GM12878 (cell line): ENCODE measurements at regions of chr20 and their contacts with region 1.

Region 1: DNA sequence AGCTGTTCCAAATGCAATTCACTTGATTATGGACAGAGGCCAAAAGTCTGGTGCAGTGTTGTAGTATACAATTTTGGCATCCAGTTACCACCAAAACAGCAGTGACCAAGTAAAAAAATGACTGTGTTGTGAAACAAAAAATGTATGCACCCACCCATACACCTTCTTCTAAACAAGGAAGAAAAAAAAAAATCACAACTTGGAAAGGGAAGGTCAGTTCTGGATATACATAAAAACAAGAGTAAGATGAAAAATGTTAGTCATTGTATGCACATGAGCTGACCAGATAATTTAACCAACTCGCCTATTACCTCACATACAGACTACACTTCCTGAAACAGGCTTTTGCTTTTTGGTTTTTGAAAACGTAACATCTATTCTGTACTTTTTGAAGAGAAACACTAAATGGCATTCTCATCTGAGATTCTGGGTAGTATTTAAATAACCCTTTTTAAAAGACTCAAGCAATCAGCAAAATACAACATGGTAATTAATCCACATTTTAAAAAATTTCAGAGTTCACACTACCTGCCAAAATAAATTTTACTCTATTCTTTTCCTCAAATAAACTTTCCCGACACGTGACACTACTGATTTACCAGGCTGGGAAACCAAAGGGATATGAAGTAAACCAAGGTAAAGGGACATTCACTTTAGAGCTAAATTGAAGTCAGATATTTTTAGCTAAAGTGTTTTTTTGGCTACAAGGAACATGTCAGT is 141.6 kb upstream of the SHLD1 start:
- DNase-seq: no peak
- ATAC-seq: peak; percentile 15
- H3K4me3 ChIP-seq: peak overlapping the region; percentile 87
- H3K27ac ChIP-seq: peak overlapping the region; percentile 98
- H3K4me1 ChIP-seq: peaks cover 5% of the 10 kb centered on the region; the same call in 1 of the 2 replicates
- H3K27me3 ChIP-seq: no peaks in the 10 kb centered on the region
- CTCF ChIP-seq: no peak
- EP300 ChIP-seq: no peak
- POLR2A ChIP-seq: no peak
- RAD21 ChIP-seq: no peak

Region 2: GRCh38 chr20:5078399-5078958 is 530.1 kb before region 1 on chr20:
- CTCF ChIA-PET with region 1: no interaction called
- POLR2A ChIA-PET with region 1: no interaction called
- RAD21 ChIA-PET with region 1: no interaction called
- SMC1A ChIA-PET with region 1: no interaction called
- in situ Hi-C with region 1: no loop called
- intact Hi-C with region 1: no loop called
- DNase-seq: peak; percentile 98
- ATAC-seq: peak; percentile 81
- H3K4me3 ChIP-seq: no peak overlapping the region; the same call in 1 of the 2 replicates
- H3K27ac ChIP-seq: peak overlapping the region; percentile 68
- H3K4me1 ChIP-seq: peaks cover 47% of the 10 kb centered on the region
- H3K27me3 ChIP-seq: no peaks in the 10 kb centered on the region; a peak in 1 of 4 replicates
- CTCF ChIP-seq: no peak
- EP300 ChIP-seq: peak; percentile 93 to 98
- POLR2A ChIP-seq: peak; percentile 51
- RAD21 ChIP-seq: no peak

Region 3: GRCh38 chr20:5364136-5364821 is 244.3 kb before region 1 on chr20:
- CTCF ChIA-PET with region 1: no interaction called
- POLR2A ChIA-PET with region 1: no interaction called
- RAD21 ChIA-PET with region 1: no interaction called
- SMC1A ChIA-PET with region 1: no interaction called
- in situ Hi-C with region 1: no loop called
- intact Hi-C with region 1: no loop called
- DNase-seq: no peak
- ATAC-seq: no peak
- H3K4me3 ChIP-seq: no peak overlapping the region
- H3K27ac ChIP-seq: no peak overlapping the region
- H3K4me1 ChIP-seq: no peaks in the 10 kb centered on the region
- H3K27me3 ChIP-seq: no peaks in the 10 kb centered on the region; a peak in 1 of 4 replicates
- CTCF ChIP-seq: no peak
- EP300 ChIP-seq: no peak
- POLR2A ChIP-seq: no peak
- RAD21 ChIP-seq: no peak

Region 4: DNA sequence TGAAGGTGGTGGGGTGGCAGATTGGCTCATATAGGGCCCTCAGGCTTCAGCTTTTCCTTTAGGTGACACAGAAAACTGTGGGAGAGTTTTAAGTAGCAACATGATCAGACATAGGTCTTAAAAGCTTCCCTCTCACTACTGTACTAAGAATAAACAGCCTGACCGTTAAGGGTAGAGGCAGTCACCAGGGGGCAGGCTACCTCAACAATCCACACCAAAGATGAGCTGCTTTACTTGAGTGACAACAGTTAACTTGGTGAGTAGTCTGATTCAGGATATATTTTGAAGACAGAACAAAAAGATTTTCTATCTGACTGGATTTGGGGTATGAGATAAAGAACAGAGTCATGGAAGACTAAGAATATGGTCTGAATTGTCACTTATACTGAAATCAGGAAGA is 51.5 kb before region 1 on chr20:
- CTCF ChIA-PET with region 1: interaction called, 15 read pairs
- POLR2A ChIA-PET with region 1: interaction called, 4 read pairs
- RAD21 ChIA-PET with region 1: interaction called, 12 read pairs
- SMC1A ChIA-PET with region 1: interaction called, 4 read pairs
- in situ Hi-C with region 1: no loop called
- intact Hi-C with region 1: no loop called
- DNase-seq: peak; percentile 15
- ATAC-seq: peak; percentile 85
- H3K4me3 ChIP-seq: no peak overlapping the region
- H3K27ac ChIP-seq: no peak overlapping the region; the same call in 1 of the 2 replicates
- H3K4me1 ChIP-seq: no peaks in the 10 kb centered on the region
- H3K27me3 ChIP-seq: no peaks in the 10 kb centered on the region
- CTCF ChIP-seq: peak; percentile 52 to 71 (median 65); a peak in 5 of 6 replicates
- EP300 ChIP-seq: no peak
- POLR2A ChIP-seq: no peak
- RAD21 ChIP-seq: peak; percentile 75

Region 5: GRCh38 chr20:5586720-5587119 is 21.9 kb before region 1 on chr20:
- CTCF ChIA-PET with region 1: interaction called, 10 read pairs
- POLR2A ChIA-PET with region 1: interaction called, 12 read pairs
- RAD21 ChIA-PET with region 1: no interaction called
- SMC1A ChIA-PET with region 1: interaction called, 7 read pairs
- in situ Hi-C with region 1: no loop called
- intact Hi-C with region 1: no loop called
- DNase-seq: no peak
- ATAC-seq: peak; percentile 56
- H3K4me3 ChIP-seq: no peak overlapping the region
- H3K27ac ChIP-seq: peak overlapping the region; percentile 44
- H3K4me1 ChIP-seq: peaks cover 44% of the 10 kb centered on the region
- H3K27me3 ChIP-seq: no peaks in the 10 kb centered on the region
- CTCF ChIP-seq: no peak
- EP300 ChIP-seq: no peak
- POLR2A ChIP-seq: no peak
- RAD21 ChIP-seq: no peak

Region 6: GRCh38 chr20:5596401-5597193 is 12.0 kb before region 1 on chr20:
- CTCF ChIA-PET with region 1: interaction called, 10 read pairs
- POLR2A ChIA-PET with region 1: interaction called, 38 read pairs
- RAD21 ChIA-PET with region 1: no interaction called
- SMC1A ChIA-PET with region 1: no interaction called
- in situ Hi-C with region 1: no loop called
- intact Hi-C with region 1: loop called (anchors 2 kb)
- DNase-seq: no peak
- ATAC-seq: peak; percentile 45
- H3K4me3 ChIP-seq: peak overlapping the region; percentile 48; the same call in 1 of the 2 replicates
- H3K27ac ChIP-seq: peak overlapping the region; percentile 96
- H3K4me1 ChIP-seq: peaks cover 72% of the 10 kb centered on the region
- H3K27me3 ChIP-seq: no peaks in the 10 kb centered on the region
- CTCF ChIP-seq: no peak
- EP300 ChIP-seq: no peak
- POLR2A ChIP-seq: no peak
- RAD21 ChIP-seq: 0 out of 2 replicates have a peak, but pooled peaks have one; percentile 3

Region 7: DNA sequence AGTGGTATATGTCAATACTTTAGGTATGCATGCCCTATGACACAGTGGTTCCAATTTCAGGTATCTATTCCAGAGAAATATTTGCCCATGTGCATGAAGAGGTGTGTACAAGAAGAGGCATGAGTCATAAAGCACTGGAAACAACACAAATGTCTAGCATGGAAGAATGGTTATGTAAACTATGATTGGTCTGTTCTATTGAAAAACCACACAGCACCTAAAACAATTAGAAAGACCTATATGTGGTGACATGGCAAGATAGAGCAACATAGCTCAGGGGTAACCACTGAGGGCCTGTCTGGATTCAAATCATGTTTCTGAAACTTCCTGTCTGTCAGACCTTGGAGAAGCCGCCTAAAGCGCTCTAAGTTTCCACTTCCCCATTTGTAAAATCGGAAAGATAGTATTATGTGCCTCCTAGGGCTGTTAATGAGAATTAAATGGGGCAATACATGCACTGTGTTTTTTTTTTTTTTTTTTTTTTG is 65.6 kb after region 1 on chr20:
- CTCF ChIA-PET with region 1: no interaction called
- POLR2A ChIA-PET with region 1: interaction called, 5 read pairs
- RAD21 ChIA-PET with region 1: interaction called, 3 read pairs
- SMC1A ChIA-PET with region 1: interaction called, 11 read pairs
- in situ Hi-C with region 1: no loop called
- intact Hi-C with region 1: loop called (anchors 2 kb)
- DNase-seq: peak; percentile 94
- ATAC-seq: peak; percentile 97
- H3K4me3 ChIP-seq: no peak overlapping the region
- H3K27ac ChIP-seq: no peak overlapping the region
- H3K4me1 ChIP-seq: peaks cover 21% of the 10 kb centered on the region
- H3K27me3 ChIP-seq: no peaks in the 10 kb centered on the region
- CTCF ChIP-seq: no peak
- EP300 ChIP-seq: no peak
- POLR2A ChIP-seq: no peak
- RAD21 ChIP-seq: no peak

Region 8: DNA sequence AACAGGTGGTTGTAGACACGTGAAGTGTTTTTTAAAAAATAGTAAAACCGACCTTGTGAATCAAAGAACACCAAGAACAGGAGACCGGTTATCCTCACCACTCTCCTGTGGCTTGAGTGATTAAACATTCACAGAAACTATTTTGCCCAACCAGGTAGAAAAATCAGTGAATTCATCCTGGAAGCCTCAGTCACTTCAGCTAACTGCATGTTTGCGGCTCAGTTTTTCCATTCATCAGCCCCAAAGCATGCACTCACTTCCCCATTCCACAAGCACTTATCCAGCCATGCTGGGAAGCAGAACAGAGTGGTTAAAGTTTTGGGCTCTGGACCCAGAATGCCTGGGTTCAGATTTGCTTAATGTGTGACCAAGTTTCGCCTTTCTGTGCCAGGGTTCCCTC is 442.9 kb after region 1 on chr20:
- CTCF ChIA-PET with region 1: no interaction called
- POLR2A ChIA-PET with region 1: no interaction called
- RAD21 ChIA-PET with region 1: no interaction called
- SMC1A ChIA-PET with region 1: no interaction called
- in situ Hi-C with region 1: no loop called
- intact Hi-C with region 1: no loop called
- DNase-seq: no peak
- ATAC-seq: no peak
- H3K4me3 ChIP-seq: no peak overlapping the region
- H3K27ac ChIP-seq: no peak overlapping the region
- H3K4me1 ChIP-seq: no peaks in the 10 kb centered on the region
- H3K27me3 ChIP-seq: peaks cover 3 to 9% of the 10 kb centered on the region in 2 experiments; a peak in 3 of 4 replicates
- CTCF ChIP-seq: no peak
- EP300 ChIP-seq: no peak
- POLR2A ChIP-seq: no peak
- RAD21 ChIP-seq: no peak